BJ (cell line): ENCODE measurements at regions of chr9 and their contacts with region 1.

Region 1: GRCh38 chr9:95753762-95754465 is 121.6 kb upstream of the ERCC6L2 start:
- DNase-seq: no peak
- H3K4me3 ChIP-seq: no peak overlapping the region
- H3K27me3 ChIP-seq: peaks cover 3% of the 10 kb centered on the region
- CTCF ChIP-seq: no peak

Region 2: GRCh38 chr9:95772320-95773052 is 18.6 kb after region 1 on chr9:
- CTCF ChIA-PET with region 1: interaction called, 3 read pairs
- POLR2A ChIA-PET with region 1: interaction called, 15 read pairs
- DNase-seq: peak; percentile 35
- H3K4me3 ChIP-seq: no peak overlapping the region
- H3K27me3 ChIP-seq: peaks cover 20% of the 10 kb centered on the region
- CTCF ChIP-seq: 0 out of 2 replicates have a peak, but pooled peaks have one; percentile 19

Region 3: GRCh38 chr9:96071076-96071814 is 317.3 kb after region 1 on chr9:
- CTCF ChIA-PET with region 1: no interaction called
- POLR2A ChIA-PET with region 1: no interaction called
- DNase-seq: no peak
- H3K4me3 ChIP-seq: no peak overlapping the region
- H3K27me3 ChIP-seq: peaks cover 2% of the 10 kb centered on the region
- CTCF ChIP-seq: peak; percentile 47